CD8-positive, alpha-beta T cell (primary cell): ENCODE measurements at regions of chr11 and their contacts with region 1.

Region 1: DNA sequence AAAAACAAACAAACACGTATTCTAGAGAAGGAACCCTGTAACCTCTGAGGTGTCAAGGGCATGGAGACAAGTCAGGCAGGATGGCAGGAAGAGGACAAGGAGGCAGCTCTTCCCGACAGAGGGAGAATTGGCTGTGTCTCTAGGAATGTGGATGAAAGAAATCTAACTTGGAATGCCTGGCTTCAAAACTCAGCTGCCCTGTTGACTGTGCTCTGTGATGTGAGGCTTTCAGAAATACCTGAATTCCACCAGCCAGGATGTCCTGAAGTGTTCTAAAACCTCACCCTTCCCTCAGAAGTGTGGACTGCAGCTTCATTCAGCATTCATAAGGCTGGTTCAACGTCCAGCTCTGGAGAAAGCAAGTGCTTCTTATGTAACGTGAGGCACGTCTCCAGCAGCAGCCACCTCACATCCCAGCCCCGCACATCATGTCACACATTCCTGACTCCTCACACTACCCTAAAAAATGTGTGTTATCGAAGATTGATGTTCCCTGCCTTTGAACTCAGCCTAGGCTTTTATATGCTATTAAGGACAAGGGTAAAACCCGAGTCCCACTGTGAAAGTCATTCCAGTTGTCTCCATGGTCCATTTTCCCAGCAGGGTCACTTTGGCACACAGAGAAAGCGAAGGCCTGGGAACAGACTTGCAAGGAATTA is 398.9 kb downstream of the ETS1 start:
- DNase-seq: no peak
- ATAC-seq: no peak
- H3K4me3 ChIP-seq: no peak overlapping the region
- H3K4me3 Mint-ChIP-seq: no peak overlapping the region
- H3K27ac ChIP-seq: peak overlapping the region in 1 of 2 experiments; percentile 4
- H3K27ac Mint-ChIP-seq: no peak overlapping the region
- H3K4me1 ChIP-seq: peaks cover 21% of the 10 kb centered on the region
- H3K4me1 Mint-ChIP-seq: peaks cover 19% of the 10 kb centered on the region
- H3K27me3 ChIP-seq: no peaks in the 10 kb centered on the region
- H3K27me3 Mint-ChIP-seq: no peaks in the 10 kb centered on the region
- CTCF ChIP-seq: no peak

Region 2: DNA sequence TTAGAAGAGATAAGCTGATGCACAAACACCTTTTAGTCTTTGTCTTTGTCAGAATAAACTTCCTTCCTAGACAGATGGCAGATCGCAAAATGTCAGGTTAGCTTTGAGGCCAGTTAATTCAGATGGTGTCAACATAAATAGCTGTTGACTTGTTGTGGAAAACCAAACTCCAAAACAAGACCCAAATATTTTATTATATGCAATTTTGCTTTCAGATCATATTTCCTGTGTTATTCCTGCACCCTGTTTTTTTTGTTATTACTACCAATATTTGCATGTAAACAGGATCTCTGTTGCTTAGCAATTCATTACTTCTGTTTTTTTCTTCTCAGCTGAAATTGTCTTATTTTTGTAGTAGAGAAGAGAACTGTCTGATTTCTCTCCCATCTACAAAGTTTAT is 82.9 kb after region 1 on chr11:
- CTCF ChIA-PET with region 1: interaction called, 3 read pairs
- POLR2A ChIA-PET with region 1: no interaction called
- intact Hi-C with region 1: loop called in 1 of 2 experiments (anchors 5 kb)
- DNase-seq: peak in 2 of 9 experiments; percentile 52 to 76
- ATAC-seq: peak; percentile 26
- H3K4me3 ChIP-seq: no peak overlapping the region
- H3K4me3 Mint-ChIP-seq: no peak overlapping the region
- H3K27ac ChIP-seq: peak overlapping the region in 1 of 2 experiments; percentile 67
- H3K27ac Mint-ChIP-seq: peak overlapping the region; percentile 25
- H3K4me1 ChIP-seq: peaks cover 15% of the 10 kb centered on the region
- H3K4me1 Mint-ChIP-seq: peaks cover 23% of the 10 kb centered on the region
- H3K27me3 ChIP-seq: no peaks in the 10 kb centered on the region
- H3K27me3 Mint-ChIP-seq: no peaks in the 10 kb centered on the region
- CTCF ChIP-seq: no peak

Region 3: GRCh38 chr11:128497061-128497775 is 308.7 kb after region 1 on chr11:
- CTCF ChIA-PET with region 1: no interaction called
- POLR2A ChIA-PET with region 1: no interaction called
- intact Hi-C with region 1: loop called in 1 of 2 experiments (anchors 5 kb)
- DNase-seq: peak in 2 of 9 experiments; percentile 51 to 64
- ATAC-seq: no peak
- H3K4me3 ChIP-seq: peak overlapping the region; percentile 24 to 43
- H3K4me3 Mint-ChIP-seq: peak overlapping the region; percentile 83
- H3K27ac ChIP-seq: peak overlapping the region; percentile 49 to 75
- H3K27ac Mint-ChIP-seq: peak overlapping the region; percentile 98
- H3K4me1 ChIP-seq: peaks cover 98% of the 10 kb centered on the region
- H3K4me1 Mint-ChIP-seq: peaks cover 96% of the 10 kb centered on the region
- H3K27me3 ChIP-seq: no peaks in the 10 kb centered on the region
- H3K27me3 Mint-ChIP-seq: no peaks in the 10 kb centered on the region
- CTCF ChIP-seq: no peak